ENCODE measurements at regions of chr11 and their contacts with region 1.

Region 1: GRCh38 chr11:102420547-102420946 is 32.0 kb downstream of the TMEM123 start:
- DNase-seq: no peak
- ATAC-seq: no peak
- H3K4me3 ChIP-seq: no peak overlapping the region
- H3K4me3 Mint-ChIP-seq: peak overlapping the region in 6 of 10 donors; percentile 6 to 65 (median 35)
- H3K27ac ChIP-seq: peak overlapping the region; percentile 12
- H3K27ac Mint-ChIP-seq: peak overlapping the region in 8 of 9 donors; percentile 48 to 97 (median 88)
- H3K4me1 ChIP-seq: peaks cover 13 to 71% of the 10 kb centered on the region in 2 donors
- H3K4me1 Mint-ChIP-seq: peaks cover 65 to 100% (median 95%) of the 10 kb centered on the region in 7 donors
- H3K27me3 ChIP-seq: no peaks in the 10 kb centered on the region
- H3K27me3 Mint-ChIP-seq: no peaks in the 10 kb centered on the region

Region 2: GRCh38 chr11:101944923-101945322 is 475.6 kb before region 1 on chr11:
- CTCF ChIA-PET with region 1: no interaction called
- POLR2A ChIA-PET with region 1: no interaction called
- intact Hi-C with region 1: no loop called
- DNase-seq: no peak
- ATAC-seq: no peak
- H3K4me3 ChIP-seq: no peak overlapping the region
- H3K4me3 Mint-ChIP-seq: no peak overlapping the region
- H3K27ac ChIP-seq: no peak overlapping the region
- H3K27ac Mint-ChIP-seq: no peak overlapping the region
- H3K4me1 ChIP-seq: no peaks in the 10 kb centered on the region
- H3K4me1 Mint-ChIP-seq: no peaks in the 10 kb centered on the region
- H3K27me3 ChIP-seq: no peaks in the 10 kb centered on the region
- H3K27me3 Mint-ChIP-seq: peaks cover 0 to 5% (median 0%) of the 10 kb centered on the region in 5 donors

Region 3: DNA sequence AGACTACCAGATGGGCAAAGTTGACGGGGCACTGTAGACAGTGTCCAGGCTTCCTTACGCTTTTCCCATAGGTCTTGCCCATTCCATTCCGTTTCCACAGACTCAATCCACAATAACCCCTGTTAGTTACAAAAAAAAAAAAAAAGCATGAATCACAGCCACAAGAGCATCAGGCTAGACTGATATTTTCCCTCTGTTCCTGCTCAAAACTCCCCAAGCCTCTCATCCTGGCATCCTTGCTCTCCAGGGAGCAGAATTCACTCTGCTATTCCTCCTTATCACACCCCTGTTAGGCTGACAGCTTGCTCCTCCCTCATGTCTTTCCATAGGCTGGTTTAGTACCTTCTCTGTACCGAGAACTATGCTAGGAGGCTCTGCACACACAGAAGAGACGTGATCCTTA is 10.2 kb before region 1 on chr11:
- CTCF ChIA-PET with region 1: interaction called, 6 read pairs
- POLR2A ChIA-PET with region 1: interaction called, 5 read pairs
- intact Hi-C with region 1: loop called in 1 of 2 experiments (anchors 2 kb)
- DNase-seq: no peak
- ATAC-seq: no peak
- H3K4me3 ChIP-seq: no peak overlapping the region
- H3K4me3 Mint-ChIP-seq: peak overlapping the region in 6 of 10 donors; percentile 33 to 76 (median 54)
- H3K27ac ChIP-seq: no peak overlapping the region
- H3K27ac Mint-ChIP-seq: peak overlapping the region; percentile 51 to 93 (median 72)
- H3K4me1 ChIP-seq: peaks cover 20 to 76% of the 10 kb centered on the region in 2 donors
- H3K4me1 Mint-ChIP-seq: peaks cover 70 to 99% (median 92%) of the 10 kb centered on the region in 7 donors
- H3K27me3 ChIP-seq: no peaks in the 10 kb centered on the region
- H3K27me3 Mint-ChIP-seq: no peaks in the 10 kb centered on the region

Measured in naive thymus-derived CD4-positive, alpha-beta T cell (primary cell).